KBM-7 (cell line): ENCODE measurements at regions of chrX and their contacts with region 1.

Region 1: DNA sequence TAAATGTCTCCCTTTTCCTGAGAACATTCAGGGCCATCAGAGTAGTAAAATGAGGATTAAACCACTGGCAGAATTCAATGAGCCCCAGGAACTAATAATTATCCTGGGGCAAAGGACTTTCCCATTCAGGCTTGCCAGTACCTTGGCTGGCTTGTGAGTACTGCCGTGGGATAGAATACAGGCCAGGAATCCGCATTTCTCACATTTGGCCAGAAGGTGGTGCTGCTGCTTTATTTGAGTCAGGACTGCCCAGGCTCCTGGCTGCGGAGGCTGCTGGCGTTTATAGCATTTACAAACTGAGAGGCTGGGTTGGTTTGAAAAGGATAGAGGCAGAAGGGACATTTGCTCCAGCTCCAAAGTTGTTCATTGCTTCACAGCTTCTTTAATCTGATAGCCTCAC is 91.4 kb downstream of the RTL9 start:
- DNase-seq: peak; percentile 80

Region 2: DNA sequence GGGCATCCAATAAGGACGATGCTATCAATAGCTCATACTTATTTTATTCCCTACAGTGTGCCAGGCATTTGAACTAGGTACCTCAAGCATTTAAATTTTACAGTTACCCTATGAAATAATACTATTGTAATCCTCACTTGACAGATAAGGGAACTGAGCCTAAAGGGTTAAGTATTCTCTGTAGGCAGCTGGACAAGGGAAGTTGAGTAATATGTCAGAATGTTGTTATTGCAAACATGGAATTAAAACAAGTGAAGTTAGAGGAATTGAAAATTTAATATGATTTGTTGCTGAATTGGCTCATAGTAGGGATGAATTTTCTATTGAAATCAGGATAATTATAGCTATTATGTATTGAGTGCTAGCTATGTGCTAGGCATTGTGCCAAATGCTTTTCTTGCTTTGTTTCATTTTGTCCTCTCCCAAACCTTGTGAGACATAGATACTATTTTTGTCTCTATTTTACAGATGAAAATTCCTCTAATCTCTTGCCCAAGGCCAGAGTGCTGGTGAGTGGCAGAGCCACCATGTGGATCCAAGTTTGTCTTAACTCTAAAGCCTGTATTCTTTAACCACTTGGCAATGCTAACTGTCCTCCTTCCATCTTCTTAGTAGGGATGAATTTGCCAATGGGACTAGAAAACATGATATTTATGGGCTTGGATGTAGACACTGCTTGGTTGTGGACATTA is 389.1 kb before region 1 on chrX:
- in situ Hi-C with region 1: no loop called
- DNase-seq: no peak

Region 3: DNA sequence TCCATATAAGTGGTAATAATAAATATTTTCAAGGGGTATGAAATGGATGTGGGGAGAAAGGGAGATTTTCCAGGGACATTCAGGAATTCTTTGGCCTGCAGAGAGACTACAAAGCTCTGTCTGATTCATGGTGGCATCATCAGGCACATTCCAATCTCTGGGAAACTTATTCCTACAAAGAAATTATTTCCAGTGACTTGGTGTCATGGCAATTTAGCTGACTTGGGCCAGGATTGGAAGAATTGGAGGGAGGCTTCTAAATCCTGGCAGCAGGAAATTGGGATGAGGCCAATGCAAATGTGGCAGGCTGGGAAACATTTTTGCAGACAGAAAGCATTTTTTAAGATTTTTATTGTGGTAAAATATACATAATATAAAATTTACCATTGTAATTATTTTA is 113.2 kb after region 1 on chrX:
- in situ Hi-C with region 1: no loop called
- DNase-seq: no peak

Region 4: GRCh38 chrX:110665223-110666002 is 215.4 kb after region 1 on chrX:
- in situ Hi-C with region 1: loop called (anchors 25 kb)
- DNase-seq: peak; percentile 50

Region 5: GRCh38 chrX:110853610-110854009 is 403.6 kb after region 1 on chrX:
- in situ Hi-C with region 1: loop called (anchors 10 kb)
- DNase-seq: peak; percentile 48